ENCODE measurements at regions of chr4 and their contacts with region 1.

Region 1: DNA sequence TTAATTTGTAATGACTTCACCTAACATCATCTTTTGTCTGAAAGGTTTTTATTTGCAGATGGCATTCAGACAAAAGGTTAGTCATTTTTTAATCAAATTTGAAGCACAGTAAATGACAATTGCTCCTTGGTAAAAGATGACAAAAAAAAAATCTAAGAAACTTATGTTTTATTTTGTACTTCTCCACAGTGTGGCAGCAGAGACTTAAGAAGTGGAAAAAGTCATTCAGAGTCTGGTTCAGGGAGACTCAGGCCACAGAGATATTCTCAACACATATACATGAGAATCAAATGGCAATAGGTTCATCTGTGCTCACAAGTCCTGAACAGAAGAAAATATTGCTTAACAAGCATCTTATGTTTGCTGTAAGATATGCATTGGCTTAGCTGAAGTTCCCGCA is 436.2 kb downstream of the KCNIP4 start:
- DNase-seq: no peak
- H3K4me3 ChIP-seq: no peak overlapping the region
- CTCF ChIP-seq: no peak
- POLR2A ChIP-seq: no peak

Region 2: GRCh38 chr4:21765810-21766407 is 253.6 kb after region 1 on chr4:
- intact Hi-C with region 1: loop called (anchors 5 kb)
- DNase-seq: peak in 1 of 2 donors; percentile 16
- H3K4me3 ChIP-seq: no peak overlapping the region
- CTCF ChIP-seq: no peak
- POLR2A ChIP-seq: no peak

Measured in lower leg skin (tissue), 4 donors.